ENCODE measurements at regions of chr12 and their contacts with region 1.

Region 1: GRCh38 chr12:81644503-81644902 is 114.6 kb downstream of the PPFIA2 start:
- ATAC-seq: peak in 4 of 8 experiments; percentile 40 to 52 (median 52)
- H3K4me3 ChIP-seq: no peak overlapping the region
- H3K27ac ChIP-seq: no peak overlapping the region
- H3K4me1 ChIP-seq: no peaks in the 10 kb centered on the region

Region 2: DNA sequence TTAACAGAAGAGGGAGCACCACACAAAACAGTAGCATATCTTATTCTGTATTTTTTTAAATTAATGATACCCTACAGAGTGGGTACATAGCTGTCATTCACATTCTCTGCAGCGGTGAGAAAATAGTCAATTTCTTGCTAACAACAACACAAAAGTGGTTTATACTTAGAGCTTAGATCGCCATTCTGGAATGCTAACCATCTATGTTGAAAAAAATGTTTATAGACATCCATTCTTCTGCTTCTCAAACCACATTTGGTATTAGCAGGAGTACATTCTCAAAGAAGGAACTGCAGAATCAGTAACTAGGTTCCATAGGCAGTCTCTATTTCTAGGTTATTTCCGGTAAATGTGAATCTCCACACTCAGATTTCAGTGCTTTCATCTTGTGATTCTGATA is 71.3 kb before region 1 on chr12:
- in situ Hi-C with region 1: no loop called
- ATAC-seq: no peak
- H3K4me3 ChIP-seq: no peak overlapping the region
- H3K27ac ChIP-seq: no peak overlapping the region
- H3K4me1 ChIP-seq: no peaks in the 10 kb centered on the region

Region 3: DNA sequence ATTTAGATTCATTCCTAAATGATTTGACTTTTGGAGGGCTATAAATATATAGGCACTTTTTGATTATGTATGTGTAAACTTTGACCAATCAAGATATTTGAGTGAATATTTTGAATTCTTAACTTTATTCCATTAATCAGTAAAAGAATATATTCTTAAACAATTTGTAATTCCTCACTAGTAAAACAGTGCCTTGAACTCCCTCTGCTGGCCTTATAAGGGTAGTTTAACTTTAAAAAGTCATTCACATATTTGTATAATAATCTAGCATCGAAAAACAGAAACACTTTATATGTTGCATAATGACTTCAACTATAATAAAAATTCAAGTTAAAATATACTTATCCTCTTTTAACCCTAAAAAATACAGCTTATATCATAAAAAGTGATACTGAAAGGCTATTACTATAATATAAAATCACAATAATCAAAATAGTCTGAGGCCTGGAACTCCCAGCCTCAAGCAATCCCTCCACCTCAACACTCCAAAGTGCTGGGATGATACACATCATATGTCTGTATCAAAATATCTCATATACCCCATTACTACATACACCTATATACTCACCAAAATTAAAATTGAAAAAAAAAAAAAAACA is 682.5 kb after region 1 on chr12:
- in situ Hi-C with region 1: loop called in 8 of 9 experiments (anchors 10 to 25 kb)
- ATAC-seq: no peak
- H3K4me3 ChIP-seq: no peak overlapping the region
- H3K27ac ChIP-seq: no peak overlapping the region
- H3K4me1 ChIP-seq: peaks cover 3 to 5% of the 10 kb centered on the region in 2 donors